IMR-90 (cell line): ENCODE measurements at regions of chr18 and their contacts with region 1.

Region 1: DNA sequence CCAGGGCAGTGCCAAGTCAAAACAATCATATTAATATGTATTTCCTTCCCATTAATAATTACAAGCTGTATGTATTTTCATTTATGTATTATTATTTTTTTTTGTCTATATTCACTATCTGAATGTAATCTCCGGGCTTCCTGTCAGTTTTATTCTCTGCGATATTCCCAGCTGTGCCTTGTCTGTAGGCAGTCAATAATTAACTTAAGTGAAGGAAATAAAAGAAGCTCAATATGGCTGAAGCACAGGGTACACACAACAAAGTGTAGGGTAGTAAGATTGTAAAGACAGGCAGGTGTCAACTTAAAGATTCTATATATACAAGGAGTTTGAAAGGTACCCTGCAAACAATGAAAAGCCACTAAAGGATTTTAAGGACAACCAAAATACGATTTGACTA is 122.9 kb downstream of the ROCK1 start:
- DNase-seq: no peak
- ATAC-seq: no peak
- H3K4me3 ChIP-seq: no peak overlapping the region
- H3K27ac ChIP-seq: no peak overlapping the region
- H3K4me1 ChIP-seq: no peaks in the 10 kb centered on the region
- H3K27me3 ChIP-seq: no peaks in the 10 kb centered on the region
- CTCF ChIP-seq: no peak
- POLR2A ChIP-seq: no peak
- RAD21 ChIP-seq: no peak

Region 2: DNA sequence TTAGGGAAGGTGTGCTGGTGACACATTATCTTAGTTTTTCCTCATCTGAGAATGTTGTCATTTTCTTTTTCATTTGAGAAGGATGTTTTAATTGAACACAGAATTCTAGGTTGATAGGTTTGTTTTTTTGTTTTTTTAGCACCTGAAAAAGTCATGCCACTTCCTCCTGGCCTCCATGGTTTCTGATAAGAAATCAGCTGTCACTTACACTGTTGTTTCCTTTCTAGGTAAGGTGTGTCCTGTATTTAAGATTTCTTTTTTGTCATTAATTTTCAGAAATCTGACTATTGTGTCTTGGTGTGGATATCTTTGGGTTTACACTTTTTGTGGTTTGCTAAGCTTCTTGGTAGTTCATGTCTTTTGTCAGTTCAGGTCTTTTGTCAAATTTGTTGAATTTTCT is 23.6 kb after region 1 on chr18:
- CTCF ChIA-PET with region 1: no interaction called
- POLR2A ChIA-PET with region 1: no interaction called
- dilution Hi-C with region 1: no loop called
- in situ Hi-C with region 1: no loop called
- intact Hi-C with region 1: loop called (anchors 5 kb)
- DNase-seq: no peak
- ATAC-seq: no peak
- H3K4me3 ChIP-seq: no peak overlapping the region
- H3K27ac ChIP-seq: no peak overlapping the region
- H3K4me1 ChIP-seq: peaks cover 2% of the 10 kb centered on the region; the same call in 1 of the 2 replicates
- H3K27me3 ChIP-seq: no peaks in the 10 kb centered on the region
- CTCF ChIP-seq: no peak
- POLR2A ChIP-seq: no peak
- RAD21 ChIP-seq: no peak

Region 3: GRCh38 chr18:21084511-21085078 is 95.9 kb after region 1 on chr18:
- CTCF ChIA-PET with region 1: no interaction called
- POLR2A ChIA-PET with region 1: no interaction called
- dilution Hi-C with region 1: no loop called
- in situ Hi-C with region 1: no loop called
- intact Hi-C with region 1: loop called (anchors 5 kb)
- DNase-seq: no peak
- ATAC-seq: no peak
- H3K4me3 ChIP-seq: no peak overlapping the region
- H3K27ac ChIP-seq: no peak overlapping the region
- H3K4me1 ChIP-seq: no peaks in the 10 kb centered on the region
- H3K27me3 ChIP-seq: no peaks in the 10 kb centered on the region
- CTCF ChIP-seq: no peak
- POLR2A ChIP-seq: no peak
- RAD21 ChIP-seq: no peak

Region 4: GRCh38 chr18:21327101-21327500 is 338.4 kb after region 1 on chr18:
- CTCF ChIA-PET with region 1: no interaction called
- POLR2A ChIA-PET with region 1: no interaction called
- dilution Hi-C with region 1: no loop called
- in situ Hi-C with region 1: no loop called
- intact Hi-C with region 1: no loop called
- DNase-seq: no peak
- ATAC-seq: no peak
- H3K4me3 ChIP-seq: no peak overlapping the region
- H3K27ac ChIP-seq: no peak overlapping the region
- H3K4me1 ChIP-seq: no peaks in the 10 kb centered on the region
- H3K27me3 ChIP-seq: peaks cover 4% of the 10 kb centered on the region
- CTCF ChIP-seq: no peak
- POLR2A ChIP-seq: no peak
- RAD21 ChIP-seq: no peak